Activated CD4-positive, alpha-beta T cell treated with anti-CD3 and anti-CD28 coated beads for 36 hours (primary cell): ENCODE measurements at regions of chr9 and their contacts with region 1.

Region 1: DNA sequence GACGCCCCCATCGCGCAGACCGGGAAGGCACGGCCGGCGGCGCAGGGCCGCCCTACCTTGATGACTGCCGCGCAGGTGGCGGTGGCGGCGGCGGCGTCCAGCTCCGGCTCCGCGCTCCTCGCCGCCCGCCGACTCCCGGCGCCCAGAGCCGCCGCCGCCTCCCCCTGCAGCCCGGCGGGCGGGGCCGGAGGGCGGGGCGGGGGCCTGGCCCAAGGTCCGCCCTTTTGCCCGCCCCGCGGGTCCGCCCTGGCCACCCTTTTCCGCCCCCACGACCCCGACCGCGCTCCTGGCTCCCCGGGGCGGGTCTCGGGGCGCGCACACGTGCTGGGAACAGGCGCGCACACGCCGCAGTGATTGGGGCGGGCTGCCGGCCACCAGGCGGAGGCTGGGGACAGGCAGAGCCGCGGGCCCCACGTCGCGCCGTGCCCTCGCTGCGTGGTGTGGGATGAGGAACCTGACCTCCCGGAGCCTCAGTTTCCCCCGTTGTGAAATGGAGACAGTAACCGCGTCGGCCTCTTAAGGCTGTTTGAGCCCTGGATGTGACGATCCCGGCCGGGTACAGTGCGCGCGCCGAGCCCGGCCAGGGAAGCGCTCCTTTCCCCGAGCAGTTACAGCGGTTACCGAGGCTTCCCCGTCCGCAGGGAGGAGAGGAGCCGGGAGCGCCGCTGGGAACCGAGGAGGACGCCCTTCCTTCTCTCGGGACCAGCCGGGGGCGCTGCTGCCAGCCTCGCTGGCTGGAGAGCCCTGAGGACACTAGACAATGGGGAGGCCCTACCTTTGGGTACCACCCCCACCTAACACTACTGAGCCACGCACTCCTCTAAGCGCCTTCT is at the start of gene CORO2A:
- DNase-seq: peak; percentile 83
- ATAC-seq: peak; percentile 78
- H3K4me3 Mint-ChIP-seq: peak within 1 kb of the TSS; percentile 78
- H3K27ac Mint-ChIP-seq: peak within 1 kb of the TSS; percentile 65
- H3K4me1 Mint-ChIP-seq: peaks cover 26% of the 10 kb centered on the region
- H3K27me3 Mint-ChIP-seq: no peaks in the 10 kb centered on the region
- total RNA-seq, gene CORO2A: 9.7 to 10.3 TPM

Region 2: GRCh38 chr9:98056269-98057137 is 136.2 kb before region 1 on chr9 and contains the start of gene NANS:
- CTCF ChIA-PET with region 1: interaction called, 4 read pairs
- POLR2A ChIA-PET with region 1: interaction called, 5 read pairs
- intact Hi-C with region 1: loop called in 1 of 2 experiments (anchors 1 kb)
- DNase-seq: peak; percentile 97
- ATAC-seq: peak; percentile 94
- H3K4me3 Mint-ChIP-seq: peak within 1 kb of the TSS; percentile 94
- H3K27ac Mint-ChIP-seq: peak within 1 kb of the TSS; percentile 98
- H3K4me1 Mint-ChIP-seq: peaks cover 28% of the 10 kb centered on the region
- H3K27me3 Mint-ChIP-seq: no peaks in the 10 kb centered on the region
- total RNA-seq, gene NANS: 45.9 to 47.7 TPM

Region 3: GRCh38 chr9:98081477-98082219 is 111.1 kb before region 1 on chr9:
- CTCF ChIA-PET with region 1: no interaction called
- POLR2A ChIA-PET with region 1: no interaction called
- intact Hi-C with region 1: loop called in 1 of 2 experiments (anchors 5 kb)
- DNase-seq: peak; percentile 78
- ATAC-seq: peak; percentile 91
- H3K4me3 Mint-ChIP-seq: no peak overlapping the region
- H3K27ac Mint-ChIP-seq: peak overlapping the region; percentile 85
- H3K4me1 Mint-ChIP-seq: peaks cover 36% of the 10 kb centered on the region
- H3K27me3 Mint-ChIP-seq: no peaks in the 10 kb centered on the region

Region 4: DNA sequence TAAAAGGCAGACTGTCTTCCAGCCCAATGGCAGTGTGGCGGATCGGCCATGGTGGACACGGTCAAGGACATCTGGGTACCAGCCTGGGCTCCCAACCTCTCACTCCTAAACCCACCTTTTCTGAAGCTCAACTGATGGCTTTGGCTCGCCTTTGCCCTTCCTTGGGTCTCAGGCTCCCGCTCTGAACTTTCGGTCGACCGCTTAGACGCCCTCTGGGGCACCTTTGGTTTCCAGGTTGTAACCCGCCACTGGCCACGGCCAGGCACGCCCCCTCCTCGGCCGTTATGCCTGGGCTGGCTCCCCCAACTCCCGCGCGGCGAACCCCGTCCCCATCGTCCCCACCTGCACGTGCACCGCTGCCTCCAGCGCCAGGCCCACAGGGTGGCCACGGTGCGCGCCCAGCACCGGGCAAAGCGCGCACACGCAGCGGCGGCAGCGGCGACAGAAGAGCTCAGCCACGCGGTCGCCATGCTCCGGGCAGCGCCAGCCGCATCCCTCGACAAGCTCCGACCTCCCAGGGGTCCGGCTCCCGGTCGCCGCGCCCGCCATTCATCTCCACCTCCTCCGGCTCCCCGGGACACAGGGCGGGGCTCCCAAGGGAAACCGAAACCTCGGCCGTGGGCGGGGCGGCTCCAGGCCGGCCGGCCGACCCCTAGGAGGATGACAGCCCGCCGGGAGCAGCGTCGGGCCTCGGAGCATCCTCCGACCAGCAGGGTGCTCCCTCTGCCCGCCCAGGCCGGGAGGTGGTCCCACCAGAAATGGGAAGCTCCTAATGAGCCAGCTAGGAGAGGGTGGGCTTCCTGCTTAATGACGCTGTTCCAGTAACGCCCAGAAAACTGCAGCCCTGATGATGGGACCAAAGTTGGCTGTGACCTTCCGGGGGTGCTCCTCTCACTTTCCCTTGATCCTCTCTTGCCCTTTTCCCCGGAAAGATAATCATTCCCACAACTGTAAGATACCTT is 73.8 kb before region 1 on chr9 and contains the start of gene TRIM14:
- CTCF ChIA-PET with region 1: interaction called, 4 read pairs
- POLR2A ChIA-PET with region 1: no interaction called
- intact Hi-C with region 1: loop called (anchors 1 to 2 kb)
- DNase-seq: peak; percentile 79
- ATAC-seq: peak; percentile 49
- H3K4me3 Mint-ChIP-seq: peak within 1 kb of the TSS; percentile 75
- H3K27ac Mint-ChIP-seq: peak within 1 kb of the TSS; percentile 91
- H3K4me1 Mint-ChIP-seq: peaks cover 47% of the 10 kb centered on the region
- H3K27me3 Mint-ChIP-seq: no peaks in the 10 kb centered on the region
- total RNA-seq, gene TRIM14: 54.6 to 59.6 TPM

Region 5: GRCh38 chr9:98207606-98208005 is 14.9 kb after region 1 on chr9:
- CTCF ChIA-PET with region 1: interaction called, 14 read pairs
- POLR2A ChIA-PET with region 1: interaction called, 4 read pairs
- intact Hi-C with region 1: no loop called
- DNase-seq: no peak
- ATAC-seq: no peak
- H3K4me3 Mint-ChIP-seq: no peak overlapping the region
- H3K27ac Mint-ChIP-seq: no peak overlapping the region
- H3K4me1 Mint-ChIP-seq: peaks cover 2% of the 10 kb centered on the region
- H3K27me3 Mint-ChIP-seq: no peaks in the 10 kb centered on the region

Region 6: DNA sequence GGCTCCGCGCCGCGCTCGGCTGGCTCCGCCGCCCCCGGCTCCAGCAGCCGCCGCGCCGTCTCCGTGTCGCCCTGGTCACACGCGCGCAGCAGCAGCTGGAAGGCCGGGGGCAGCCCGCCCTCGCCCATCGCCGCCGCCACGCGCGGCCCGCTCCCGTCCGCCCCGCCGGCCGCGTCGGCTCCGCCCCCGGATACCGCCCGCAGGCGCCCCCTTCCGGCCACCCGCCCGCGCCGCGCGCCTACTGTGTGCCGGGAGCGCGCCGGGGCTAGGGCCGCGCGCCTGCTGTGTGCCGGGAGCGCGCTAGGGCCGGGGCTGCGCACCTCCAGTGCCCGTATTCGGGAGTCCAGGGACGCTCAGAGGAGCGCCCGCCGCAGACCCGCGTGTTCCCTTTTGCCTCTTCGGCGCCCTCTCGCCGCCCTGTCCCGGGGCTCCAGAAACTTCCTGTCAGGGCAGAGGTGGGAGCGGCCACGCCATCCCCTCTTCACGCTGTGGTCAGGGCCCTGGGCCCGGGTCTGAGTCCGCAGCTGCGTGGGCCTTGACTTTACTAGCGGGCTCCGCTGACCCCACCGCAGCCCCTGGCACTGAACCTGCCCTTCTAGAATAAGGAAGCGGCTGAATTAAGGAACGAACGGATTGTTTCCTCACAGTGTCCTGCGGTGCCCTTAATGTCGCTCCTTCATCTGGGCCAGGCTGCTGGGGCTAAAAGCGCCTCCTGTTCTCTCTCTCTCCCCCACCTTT is 603.8 kb after region 1 on chr9 and contains the start of gene ANKS6:
- CTCF ChIA-PET with region 1: no interaction called
- POLR2A ChIA-PET with region 1: no interaction called
- intact Hi-C with region 1: loop called (anchors 1 to 10 kb)
- DNase-seq: peak; percentile 90
- ATAC-seq: peak; percentile 90
- H3K4me3 Mint-ChIP-seq: peak within 1 kb of the TSS; percentile 77
- H3K27ac Mint-ChIP-seq: peak within 1 kb of the TSS; percentile 81
- H3K4me1 Mint-ChIP-seq: peaks cover 25% of the 10 kb centered on the region
- H3K27me3 Mint-ChIP-seq: no peaks in the 10 kb centered on the region
- total RNA-seq, gene ANKS6: 15.8 to 17.4 TPM

Region 7: DNA sequence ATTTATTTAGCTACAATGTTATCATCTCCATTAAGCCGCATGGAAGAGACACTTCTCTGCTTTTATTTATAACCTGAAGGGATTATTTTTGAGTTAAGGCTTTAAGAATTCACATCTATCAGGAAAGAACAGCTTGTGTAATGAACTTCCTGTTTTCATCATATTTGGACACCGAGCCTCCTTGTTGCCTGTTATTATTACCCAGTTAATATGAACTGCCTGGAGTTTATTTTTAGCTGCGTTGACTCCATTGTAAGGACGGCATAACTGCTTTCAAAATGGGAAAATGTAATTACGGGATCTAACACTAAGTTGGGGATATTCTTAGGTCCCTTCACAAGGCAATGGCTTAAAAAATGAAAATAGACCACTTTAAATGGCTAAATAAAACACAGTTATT is 1540.0 kb after region 1 on chr9:
- CTCF ChIA-PET with region 1: no interaction called
- POLR2A ChIA-PET with region 1: no interaction called
- intact Hi-C with region 1: no loop called
- DNase-seq: no peak
- ATAC-seq: no peak
- H3K4me3 Mint-ChIP-seq: no peak overlapping the region
- H3K27ac Mint-ChIP-seq: no peak overlapping the region
- H3K4me1 Mint-ChIP-seq: no peaks in the 10 kb centered on the region
- H3K27me3 Mint-ChIP-seq: peaks cover 14% of the 10 kb centered on the region